ENCODE measurements at regions of chr1 and their contacts with region 1.

Region 1: DNA sequence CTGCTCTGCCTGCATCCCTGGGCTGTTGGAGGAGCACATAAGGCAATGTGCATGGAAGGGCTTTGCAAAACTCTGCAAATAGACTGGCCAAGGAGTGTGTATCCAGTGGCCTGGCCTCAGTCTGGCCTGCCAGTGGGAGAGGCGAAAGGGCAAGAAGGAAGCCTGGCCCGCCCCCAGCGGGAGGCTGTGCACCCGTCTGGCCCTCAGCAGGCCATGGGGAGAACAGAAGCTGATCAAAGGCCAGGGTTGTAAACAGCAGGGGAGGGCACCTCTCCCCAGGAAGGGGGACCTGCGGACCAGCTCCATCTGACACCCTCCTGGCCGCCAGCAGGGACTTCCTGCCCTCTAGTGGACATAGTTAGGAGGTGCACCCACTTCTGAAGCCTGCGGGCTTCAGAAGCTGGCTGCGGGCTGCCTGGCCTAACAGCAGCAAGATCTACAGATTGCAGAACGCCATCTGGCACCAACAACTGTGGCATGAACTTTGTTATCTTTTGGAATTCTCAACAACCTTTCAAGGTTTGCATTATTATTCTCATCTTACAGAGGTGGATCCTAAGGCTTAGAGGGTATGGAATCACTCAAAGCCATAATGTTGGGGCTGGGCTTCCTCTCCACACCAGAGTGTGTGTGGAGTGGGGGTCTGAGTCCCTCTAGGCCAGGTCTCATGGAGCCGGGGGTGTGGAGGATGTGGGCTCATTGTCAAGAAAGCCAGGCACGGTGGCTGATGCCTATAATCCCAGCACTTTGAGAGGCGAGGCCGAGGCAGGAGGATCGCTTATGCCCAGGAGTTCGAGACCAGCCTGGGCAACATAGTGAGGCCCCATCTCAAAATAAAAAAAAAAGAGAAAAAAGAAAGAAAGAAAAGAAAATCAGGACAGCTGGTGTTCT is 18.9 kb upstream of the CDK18 start:
- DNase-seq: peak; percentile 53
- H3K4me3 Mint-ChIP-seq: no peak overlapping the region
- H3K27ac Mint-ChIP-seq: no peak overlapping the region
- H3K4me1 Mint-ChIP-seq: peaks cover 11% of the 10 kb centered on the region
- H3K27me3 Mint-ChIP-seq: peaks cover 50% of the 10 kb centered on the region

Region 2: DNA sequence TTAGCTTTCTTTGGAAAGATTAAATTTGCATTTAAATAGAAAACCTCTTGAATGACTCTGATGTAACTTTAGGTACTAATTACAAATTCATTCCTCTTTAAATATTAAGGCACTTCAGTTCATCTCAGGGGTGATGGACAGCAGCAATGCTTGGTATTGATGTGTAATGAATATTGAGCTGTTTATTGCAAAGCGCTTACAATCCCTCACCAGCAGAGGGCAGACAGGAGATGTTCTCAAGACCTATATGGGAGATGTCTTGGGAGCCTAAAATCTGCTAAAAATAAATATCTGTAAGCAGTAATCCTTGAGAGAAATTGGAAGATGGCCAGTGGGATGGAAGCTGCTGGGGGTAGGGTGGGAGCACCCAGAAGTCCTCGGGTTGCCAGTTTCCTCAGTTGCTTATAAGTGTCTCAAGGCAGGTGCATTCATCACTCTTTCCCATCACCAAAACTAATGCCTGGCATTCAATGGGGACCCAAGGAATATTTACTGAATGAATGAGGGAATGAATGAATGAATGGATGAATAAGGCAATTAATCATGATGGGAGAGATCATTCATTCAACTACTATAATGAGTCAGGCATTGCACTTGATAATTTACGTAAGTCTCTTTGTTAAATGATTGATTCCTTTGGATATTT is 131.2 kb before region 1 on chr1:
- intact Hi-C with region 1: loop called (anchors 1 kb)
- DNase-seq: peak; percentile 24
- H3K4me3 Mint-ChIP-seq: no peak overlapping the region
- H3K27ac Mint-ChIP-seq: no peak overlapping the region
- H3K4me1 Mint-ChIP-seq: no peaks in the 10 kb centered on the region
- H3K27me3 Mint-ChIP-seq: peaks cover 15% of the 10 kb centered on the region